Endothelial cell of umbilical vein (primary cell): ENCODE measurements at regions of chr22 and their contacts with region 1.

Region 1: GRCh38 chr22:24156913-24157821 is 24.1 kb upstream of the SUSD2 start:
- DNase-seq: peak; percentile 75
- H3K4me3 ChIP-seq: peak overlapping the region; percentile 53 to 91 (median 76)
- H3K27ac ChIP-seq: no peak overlapping the region
- H3K4me1 ChIP-seq: peaks cover 13% of the 10 kb centered on the region
- H3K27me3 ChIP-seq: no peaks in the 10 kb centered on the region
- CTCF ChIP-seq: peak; percentile 89 to 97
- POLR2A ChIP-seq: no peak

Region 2: GRCh38 chr22:24011735-24012068 is 145.5 kb before region 1 on chr22:
- CTCF ChIA-PET with region 1: interaction called, 3 read pairs
- POLR2A ChIA-PET with region 1: no interaction called
- dilution Hi-C with region 1: no loop called
- intact Hi-C with region 1: loop called (anchors 5 kb)
- DNase-seq: no peak
- H3K4me3 ChIP-seq: peak overlapping the region; percentile 78 to 93 (median 88)
- H3K27ac ChIP-seq: peak overlapping the region; percentile 46
- H3K4me1 ChIP-seq: peaks cover 5% of the 10 kb centered on the region
- H3K27me3 ChIP-seq: no peaks in the 10 kb centered on the region
- CTCF ChIP-seq: no peak
- POLR2A ChIP-seq: no peak

Region 3: GRCh38 chr22:24060375-24060788 is 96.8 kb before region 1 on chr22:
- CTCF ChIA-PET with region 1: interaction called, 13 read pairs
- POLR2A ChIA-PET with region 1: no interaction called
- dilution Hi-C with region 1: no loop called
- intact Hi-C with region 1: loop called (anchors 1 kb)
- DNase-seq: peak; percentile 97
- H3K4me3 ChIP-seq: no peak overlapping the region
- H3K27ac ChIP-seq: peak overlapping the region; percentile 90
- H3K4me1 ChIP-seq: peaks cover 32% of the 10 kb centered on the region
- H3K27me3 ChIP-seq: no peaks in the 10 kb centered on the region
- CTCF ChIP-seq: no peak
- POLR2A ChIP-seq: peak; percentile 24

Region 4: GRCh38 chr22:24076091-24076867 is 80.9 kb before region 1 on chr22:
- CTCF ChIA-PET with region 1: no interaction called
- POLR2A ChIA-PET with region 1: no interaction called
- dilution Hi-C with region 1: no loop called
- intact Hi-C with region 1: no loop called
- DNase-seq: no peak
- H3K4me3 ChIP-seq: no peak overlapping the region
- H3K27ac ChIP-seq: no peak overlapping the region
- H3K4me1 ChIP-seq: no peaks in the 10 kb centered on the region
- H3K27me3 ChIP-seq: no peaks in the 10 kb centered on the region
- CTCF ChIP-seq: no peak
- POLR2A ChIP-seq: no peak

Region 5: GRCh38 chr22:24106385-24107381 is 50.5 kb before region 1 on chr22:
- CTCF ChIA-PET with region 1: interaction called, 23 read pairs
- POLR2A ChIA-PET with region 1: no interaction called
- dilution Hi-C with region 1: no loop called
- intact Hi-C with region 1: no loop called
- DNase-seq: peak; percentile 5
- H3K4me3 ChIP-seq: no peak overlapping the region
- H3K27ac ChIP-seq: no peak overlapping the region
- H3K4me1 ChIP-seq: no peaks in the 10 kb centered on the region
- H3K27me3 ChIP-seq: no peaks in the 10 kb centered on the region
- CTCF ChIP-seq: no peak
- POLR2A ChIP-seq: no peak

Region 6: DNA sequence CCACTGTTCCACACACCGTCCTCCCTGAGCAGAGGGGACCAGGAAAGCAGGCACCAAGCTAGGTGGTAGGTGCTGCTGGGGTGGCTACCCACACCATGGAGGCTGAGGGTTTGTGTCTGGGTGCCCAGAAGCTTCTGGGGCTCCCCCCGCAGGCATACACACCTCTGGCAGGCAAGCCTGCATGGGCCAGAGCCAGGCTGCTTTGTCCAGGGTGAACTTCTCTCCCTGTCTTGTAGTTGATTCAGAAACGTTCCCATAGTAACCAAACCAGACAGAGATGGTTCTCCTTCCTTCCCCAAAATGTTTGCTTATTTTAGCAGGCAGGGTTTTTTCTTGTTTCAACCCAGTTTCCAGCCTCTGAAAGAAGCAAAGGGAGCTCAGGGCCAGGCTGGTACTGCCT is 16.8 kb before region 1 on chr22:
- CTCF ChIA-PET with region 1: interaction called, 21 read pairs
- POLR2A ChIA-PET with region 1: no interaction called
- dilution Hi-C with region 1: no loop called
- intact Hi-C with region 1: no loop called
- DNase-seq: no peak
- H3K4me3 ChIP-seq: no peak overlapping the region
- H3K27ac ChIP-seq: no peak overlapping the region
- H3K4me1 ChIP-seq: no peaks in the 10 kb centered on the region
- H3K27me3 ChIP-seq: no peaks in the 10 kb centered on the region
- CTCF ChIP-seq: no peak
- POLR2A ChIP-seq: no peak

Region 7: GRCh38 chr22:24146194-24146616 is 11.0 kb before region 1 on chr22:
- CTCF ChIA-PET with region 1: interaction called, 21 read pairs
- POLR2A ChIA-PET with region 1: no interaction called
- dilution Hi-C with region 1: no loop called
- intact Hi-C with region 1: no loop called
- DNase-seq: no peak
- H3K4me3 ChIP-seq: no peak overlapping the region
- H3K27ac ChIP-seq: peak overlapping the region; percentile 4
- H3K4me1 ChIP-seq: peaks cover 15% of the 10 kb centered on the region
- H3K27me3 ChIP-seq: no peaks in the 10 kb centered on the region
- CTCF ChIP-seq: no peak
- POLR2A ChIP-seq: no peak